Heart left ventricle (tissue), 16 donors: ENCODE measurements at regions of chr17 and their contacts with region 1.

Region 1: DNA sequence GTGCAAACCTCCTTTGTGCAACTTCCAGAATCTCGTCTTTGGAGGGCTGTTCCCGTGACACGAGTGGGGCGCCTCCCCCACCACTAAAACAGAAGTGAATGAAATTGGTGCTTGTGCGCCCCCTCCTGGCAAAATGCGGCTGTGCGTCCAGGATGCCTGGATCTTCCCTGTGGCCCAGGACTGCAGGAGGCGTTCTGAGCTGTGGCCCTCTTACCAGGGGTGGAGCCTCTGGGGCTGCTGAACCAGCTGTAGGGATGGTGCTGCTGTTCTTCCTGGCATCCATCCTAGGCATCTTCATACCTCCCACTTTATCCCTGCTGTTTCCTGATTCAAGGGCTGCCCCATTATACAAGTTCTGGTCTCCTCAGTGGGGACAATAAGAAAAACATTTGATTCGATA is 18.5 kb upstream of the NAGLU start:
- DNase-seq: peak; percentile 83 to 92 (median 86)
- ATAC-seq: peak; percentile 19 to 66 (median 48)
- H3K4me3 ChIP-seq: peak overlapping the region in 1 of 12 donors; percentile 5
- H3K27ac ChIP-seq: peak overlapping the region; percentile 84 to 97 (median 92)
- H3K4me1 ChIP-seq: peaks cover 23 to 85% (median 68%) of the 10 kb centered on the region in 12 donors
- H3K27me3 ChIP-seq: no peaks in the 10 kb centered on the region
- CTCF ChIP-seq: peak; percentile 85 to 96 (median 92)
- POLR2A ChIP-seq: no peak

Region 2: DNA sequence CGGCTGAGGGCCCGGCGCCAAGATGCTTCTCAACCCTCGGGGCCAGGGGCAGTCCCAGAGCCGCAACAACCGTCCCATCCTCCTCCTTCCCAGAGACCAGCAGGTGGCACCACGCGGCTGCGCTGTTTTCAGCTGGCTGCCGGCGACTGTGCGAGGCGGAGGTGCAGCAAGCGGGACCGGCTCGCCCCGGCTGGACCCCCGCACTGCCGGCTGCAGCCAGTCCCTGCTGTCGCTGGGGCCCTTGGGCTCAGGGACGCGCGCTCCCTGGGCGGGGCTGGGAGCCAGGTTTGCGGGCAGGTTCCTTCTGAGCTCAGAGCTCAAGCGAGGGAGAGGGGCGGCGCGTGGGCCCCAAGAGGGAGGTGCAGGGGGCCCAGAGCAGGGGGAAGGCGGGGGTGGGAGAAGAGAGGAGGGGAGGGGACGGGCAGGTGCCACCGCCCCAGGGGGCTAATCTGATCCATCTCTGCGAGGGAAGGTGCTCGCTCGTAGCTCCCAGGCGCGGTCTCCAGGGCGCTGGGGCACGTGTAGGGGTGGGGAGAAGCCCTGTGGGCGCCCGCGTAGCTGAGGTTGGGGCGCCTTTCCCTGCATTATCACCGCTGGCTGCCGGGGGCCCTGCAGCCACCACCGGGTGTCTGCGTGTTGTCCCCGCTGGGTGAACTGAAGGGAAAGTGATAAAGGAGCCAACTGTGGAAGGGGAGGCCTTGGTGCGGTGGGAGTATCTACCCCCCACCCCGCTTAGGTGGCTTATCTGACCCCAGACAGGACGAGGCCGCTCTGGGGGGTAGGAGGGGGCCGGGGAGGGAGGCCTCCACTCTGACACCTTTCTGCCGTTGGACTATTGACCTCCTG is 205.0 kb before region 1 on chr17:
- intact Hi-C with region 1: loop called in 1 of 10 experiments (anchors 5 kb)
- DNase-seq: peak; percentile 87 to 92 (median 91)
- ATAC-seq: peak; percentile 75 to 85 (median 82)
- H3K4me3 ChIP-seq: peak overlapping the region in 9 of 12 donors; percentile 1 to 44 (median 24)
- H3K27ac ChIP-seq: peak overlapping the region; percentile 55 to 92 (median 76)
- H3K4me1 ChIP-seq: peaks cover 4 to 47% (median 27%) of the 10 kb centered on the region in 12 donors
- H3K27me3 ChIP-seq: no peaks in the 10 kb centered on the region
- CTCF ChIP-seq: peak; percentile 38 to 77 (median 66)
- POLR2A ChIP-seq: no peak

Region 3: DNA sequence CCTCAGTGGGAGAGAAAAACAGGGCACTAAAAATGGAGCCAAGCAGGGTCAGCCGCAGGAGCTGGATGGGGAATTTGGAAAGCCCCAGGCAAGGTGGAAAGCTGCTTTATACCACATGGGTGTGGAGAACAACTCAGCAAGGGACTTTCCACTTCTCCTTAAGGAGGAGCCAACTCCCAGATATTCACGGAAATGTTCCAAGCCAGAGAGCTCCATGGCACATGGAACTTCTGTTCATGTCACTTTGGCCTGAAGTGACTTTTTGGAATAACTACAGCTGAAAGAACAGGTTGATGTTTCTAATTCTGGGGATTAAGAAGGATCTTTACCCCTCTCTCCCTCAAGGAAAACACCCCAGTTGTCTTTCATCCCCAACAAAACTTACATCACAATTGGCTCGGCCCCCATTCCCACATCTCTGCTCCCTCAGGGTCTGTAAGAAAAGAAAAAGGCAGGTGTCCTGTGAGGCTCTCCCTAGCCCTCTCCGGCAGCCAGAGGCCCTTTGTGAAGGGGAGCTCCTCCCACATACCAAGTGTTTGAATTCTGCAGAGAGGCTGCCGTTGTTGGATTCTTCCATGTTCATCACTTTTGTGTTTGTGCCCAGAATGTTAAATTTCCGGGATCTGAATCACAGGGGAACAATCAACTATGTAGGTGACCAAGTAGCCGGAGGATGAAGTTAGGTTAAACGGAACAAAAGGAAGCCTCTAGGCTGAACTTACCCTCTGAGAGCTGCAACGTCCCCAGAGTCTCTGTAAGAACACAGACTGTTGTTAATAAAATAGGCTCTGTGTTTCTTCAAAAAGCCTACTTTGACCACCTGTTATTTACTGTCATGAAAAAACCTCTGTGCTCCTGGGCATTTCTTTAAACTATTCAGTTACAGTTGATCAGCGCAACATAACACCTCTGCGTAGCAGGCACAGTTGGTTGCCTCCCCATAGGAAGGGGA is 188.2 kb before region 1 on chr17:
- intact Hi-C with region 1: loop called in 6 of 10 experiments (anchors 5 to 10 kb)
- DNase-seq: no peak
- ATAC-seq: peak; percentile 39 to 78 (median 51)
- H3K4me3 ChIP-seq: no peak overlapping the region
- H3K27ac ChIP-seq: peak overlapping the region in 11 of 12 donors; percentile 25 to 69 (median 43)
- H3K4me1 ChIP-seq: peaks cover 0 to 19% (median 15%) of the 10 kb centered on the region in 12 donors
- H3K27me3 ChIP-seq: no peaks in the 10 kb centered on the region
- CTCF ChIP-seq: peak in 1 of 12 donors; percentile 13
- POLR2A ChIP-seq: no peak

Region 4: GRCh38 chr17:42422958-42423712 is 94.4 kb before region 1 on chr17 and contains the start of gene CAVIN1:
- intact Hi-C with region 1: loop called in 7 of 10 experiments (anchors 5 to 10 kb)
- DNase-seq: peak; percentile 99 to 100 (median 100)
- ATAC-seq: peak; percentile 90 to 96 (median 92)
- H3K4me3 ChIP-seq: peak within 1 kb of the TSS; percentile 71 to 100 (median 92)
- H3K27ac ChIP-seq: peak within 1 kb of the TSS; percentile 93 to 100 (median 99)
- H3K4me1 ChIP-seq: peaks cover 6 to 54% (median 36%) of the 10 kb centered on the region in 12 donors
- H3K27me3 ChIP-seq: peaks cover 0 to 31% (median 0%) of the 10 kb centered on the region in 9 donors
- CTCF ChIP-seq: peak in 2 of 12 donors; percentile 13 to 22
- POLR2A ChIP-seq: peak; percentile 77 to 97
- total RNA-seq, gene CAVIN1: 195 to 318 (median 253) TPM

Region 5: DNA sequence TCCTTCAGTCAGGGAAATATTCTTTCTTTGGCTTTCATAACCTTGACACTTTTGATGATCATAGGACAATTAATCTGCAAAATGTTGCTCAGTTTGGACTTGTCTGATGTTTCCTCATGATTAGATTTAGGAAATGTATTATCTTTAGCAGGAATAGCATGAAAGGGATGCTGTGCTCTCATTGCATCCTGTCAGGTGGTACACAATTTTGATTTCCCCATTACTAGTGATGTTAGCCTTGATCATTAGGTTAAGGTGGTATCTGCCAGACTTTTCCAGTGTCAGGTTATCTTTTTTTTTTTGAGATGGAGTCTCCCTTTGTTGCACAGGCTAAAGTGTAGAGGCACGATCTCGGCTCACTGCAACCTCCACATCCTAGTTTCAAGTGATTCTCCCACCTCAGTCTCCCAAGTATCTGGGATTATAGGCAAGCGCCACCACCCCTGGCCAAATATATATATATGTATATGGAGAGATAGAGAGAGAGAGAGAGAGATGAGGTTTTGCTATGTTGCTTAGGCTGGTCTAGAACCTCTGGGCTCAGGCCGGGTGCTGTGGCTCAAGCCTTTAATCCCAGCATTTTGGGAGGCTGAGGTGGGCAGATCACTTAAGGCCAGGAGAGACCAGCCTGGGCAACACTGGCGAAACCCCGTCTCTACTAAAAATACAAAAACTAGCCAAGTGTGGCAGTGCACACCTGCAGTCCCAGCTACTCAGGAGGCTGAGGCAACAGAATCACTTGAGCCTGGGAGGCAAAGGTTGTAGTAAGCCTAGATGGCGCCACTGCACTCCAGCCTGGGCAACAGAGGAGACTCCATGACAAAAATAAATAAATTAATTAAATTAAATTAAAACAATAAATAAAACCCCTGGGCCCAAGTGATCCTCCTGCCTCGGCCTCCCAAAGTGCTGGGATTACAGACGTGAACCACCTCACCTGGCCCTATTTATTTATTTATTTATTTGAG is 78.6 kb before region 1 on chr17:
- intact Hi-C with region 1: loop called in 1 of 10 experiments (anchors 5 kb)
- DNase-seq: no peak
- ATAC-seq: no peak
- H3K4me3 ChIP-seq: no peak overlapping the region
- H3K27ac ChIP-seq: no peak overlapping the region
- H3K4me1 ChIP-seq: peaks cover 0 to 32% (median 18%) of the 10 kb centered on the region in 12 donors
- H3K27me3 ChIP-seq: no peaks in the 10 kb centered on the region
- CTCF ChIP-seq: peak in 9 of 12 donors; percentile 12 to 51 (median 37)
- POLR2A ChIP-seq: no peak

Region 6: GRCh38 chr17:42467859-42468258 is 49.7 kb before region 1 on chr17:
- intact Hi-C with region 1: loop called in 2 of 10 experiments (anchors 5 to 10 kb)
- DNase-seq: no peak
- ATAC-seq: no peak
- H3K4me3 ChIP-seq: no peak overlapping the region
- H3K27ac ChIP-seq: no peak overlapping the region
- H3K4me1 ChIP-seq: peaks cover 0 to 17% (median 0%) of the 10 kb centered on the region in 12 donors
- H3K27me3 ChIP-seq: no peaks in the 10 kb centered on the region
- CTCF ChIP-seq: no peak
- POLR2A ChIP-seq: no peak